ENCODE measurements at regions of chr6 and their contacts with region 1.

Region 1: DNA sequence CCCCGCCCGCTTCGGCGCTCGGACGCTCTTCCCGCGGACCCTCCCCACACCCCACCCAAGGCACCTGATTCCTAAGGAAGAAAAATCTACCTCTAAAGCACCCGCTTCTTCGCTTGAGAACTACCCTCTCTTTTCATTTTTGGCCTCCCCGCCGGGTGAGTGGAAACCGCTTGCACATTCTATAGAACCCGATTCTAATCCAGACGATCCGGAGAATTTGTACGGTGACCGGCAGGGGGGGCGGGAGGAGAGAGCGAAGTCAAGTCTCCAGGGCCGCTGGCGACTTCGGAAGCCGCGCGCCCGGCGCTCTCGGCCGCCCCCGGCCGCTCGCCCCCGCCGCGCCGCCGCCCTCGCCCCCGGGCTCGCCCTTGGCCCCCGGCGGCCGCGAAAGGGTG is at the start of gene RBM24:
- DNase-seq: peak; percentile 84
- total RNA-seq, gene RBM24: 15.7 to 23.6 TPM

Region 2: GRCh38 chr6:17066610-17067009 is 214.5 kb before region 1 on chr6:
- intact Hi-C with region 1: no loop called
- DNase-seq: no peak

Region 3: DNA sequence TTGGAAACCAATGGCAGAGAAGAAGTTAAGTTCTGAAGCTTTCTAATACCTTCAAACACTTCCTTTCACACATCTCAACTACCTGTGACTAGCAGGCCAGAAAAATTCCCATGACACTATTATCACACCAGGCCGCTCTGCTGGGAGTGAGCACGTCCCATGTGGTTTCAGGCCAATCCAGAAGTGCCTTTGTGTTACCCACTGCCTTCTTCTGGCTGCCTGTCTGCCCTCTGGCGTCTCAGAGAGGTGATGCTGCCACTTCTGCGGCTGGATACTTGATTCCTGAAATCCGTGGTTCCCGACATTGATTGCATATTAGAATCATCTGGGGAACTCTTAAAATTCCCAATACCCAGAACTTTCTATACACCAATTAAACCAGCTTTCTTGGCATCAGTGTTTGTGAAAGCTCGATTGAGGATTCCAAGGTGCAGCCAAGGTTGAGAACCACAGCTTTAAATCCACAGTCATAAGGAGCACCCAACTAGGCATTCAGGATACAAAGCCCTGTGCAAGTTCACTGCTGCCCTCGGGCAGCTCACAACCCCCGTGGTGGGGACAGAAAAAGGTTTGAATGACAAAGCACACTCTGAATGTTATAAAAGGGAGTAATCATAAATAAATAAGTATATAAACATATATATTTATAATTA is 113.6 kb before region 1 on chr6:
- intact Hi-C with region 1: loop called in 1 of 2 experiments (anchors 10 kb)
- DNase-seq: no peak

Region 4: GRCh38 chr6:17212546-17213371 is 68.3 kb before region 1 on chr6:
- intact Hi-C with region 1: loop called in 1 of 2 experiments (anchors 10 kb)
- DNase-seq: peak; percentile 87

Region 5: DNA sequence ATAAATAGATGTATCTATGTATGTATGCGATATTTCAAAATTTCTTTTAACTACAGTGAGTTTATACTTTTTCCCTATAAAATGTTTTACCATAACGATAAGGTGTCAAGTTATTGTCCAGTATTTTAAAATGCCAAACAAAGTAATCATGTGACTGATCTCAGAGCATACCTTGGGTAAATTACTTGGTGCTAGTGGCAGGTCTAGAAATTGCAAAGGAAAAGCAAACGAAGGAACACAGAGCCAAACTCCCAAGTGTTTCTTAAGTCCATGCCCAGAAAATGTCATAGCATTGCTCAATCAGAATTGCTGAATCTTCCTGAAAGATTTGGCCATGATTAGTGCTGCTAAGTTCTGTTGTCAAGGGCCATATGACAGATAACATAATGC is 189.8 kb after region 1 on chr6:
- intact Hi-C with region 1: loop called in 1 of 2 experiments (anchors 5 kb)
- DNase-seq: no peak

Region 6: DNA sequence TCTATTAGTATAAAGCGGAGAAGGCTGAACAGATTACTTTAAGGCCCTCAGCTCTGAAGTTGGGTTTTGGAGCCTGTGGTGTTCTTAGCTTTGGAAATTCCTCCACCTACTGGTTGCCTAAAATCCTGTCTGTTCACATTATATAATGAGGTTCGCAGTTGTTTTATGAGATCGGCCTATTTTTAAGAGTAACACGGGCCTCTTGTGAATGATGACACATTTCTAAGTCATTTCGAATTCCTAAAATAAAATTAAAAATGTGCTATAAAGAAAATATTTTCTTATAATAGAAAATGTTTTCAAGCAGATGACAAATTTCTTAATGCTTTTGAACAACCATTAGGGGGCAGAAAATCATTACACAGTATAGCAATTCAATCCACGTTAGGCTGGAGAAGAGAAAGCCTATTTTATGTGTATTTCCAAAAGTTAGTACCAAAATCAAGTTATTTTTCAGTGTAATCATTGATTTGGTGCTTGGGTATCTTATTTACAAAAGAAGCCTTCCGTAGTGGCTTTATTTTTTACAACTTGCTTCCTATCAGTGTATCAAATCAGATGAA is 303.2 kb after region 1 on chr6:
- intact Hi-C with region 1: loop called in 1 of 2 experiments (anchors 5 kb)
- DNase-seq: no peak